ENCODE measurements at regions of chr4 and their contacts with region 1.

Region 1: GRCh38 chr4:2241410-2242353 is at the starts of genes HAUS3 and POLN:
- DNase-seq: peak; percentile 96
- ATAC-seq: peak; percentile 98
- H3K4me3 ChIP-seq: peak within 1 kb of the TSS; percentile 78
- H3K27ac ChIP-seq: peak within 1 kb of the TSS; percentile 48
- H3K4me1 ChIP-seq: peaks cover 6% of the 10 kb centered on the region
- H3K27me3 ChIP-seq: no peaks in the 10 kb centered on the region
- CTCF ChIP-seq: no peak
- POLR2A ChIP-seq: peak; percentile 26; the same call in 1 of the 2 replicates
- RAD21 ChIP-seq: no peak; the same call in 1 of the 2 replicates
- total RNA-seq, gene HAUS3: 4.3 and 6.9 TPM in 2 replicates
- total RNA-seq, gene POLN: 0.72 and 1.1 TPM in 2 replicates

Region 2: DNA sequence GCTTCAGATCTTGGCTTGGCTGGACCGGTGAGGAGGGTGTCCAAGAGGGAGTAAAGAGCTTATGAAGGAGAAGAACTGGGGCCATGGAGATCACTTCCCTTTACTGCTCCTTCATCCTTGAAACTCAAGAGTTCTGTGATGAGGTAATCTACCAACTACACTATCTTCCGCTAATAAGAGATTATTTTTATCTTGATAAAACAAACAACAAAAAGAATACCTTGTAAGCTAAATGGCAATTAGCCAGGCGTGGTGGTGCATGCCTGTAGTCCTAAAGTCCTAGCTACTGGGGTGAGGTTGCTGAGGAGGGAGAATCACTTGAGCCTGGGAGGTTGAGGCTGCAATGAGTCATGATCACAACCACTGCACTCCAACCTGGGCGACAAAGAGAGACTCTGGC is 47.2 kb before region 1 on chr4:
- CTCF ChIA-PET with region 1: no interaction called
- POLR2A ChIA-PET with region 1: no interaction called
- dilution Hi-C with region 1: no loop called
- in situ Hi-C with region 1: no loop called
- intact Hi-C with region 1: no loop called
- DNase-seq: peak; percentile 10
- ATAC-seq: no peak
- H3K4me3 ChIP-seq: no peak overlapping the region
- H3K27ac ChIP-seq: no peak overlapping the region
- H3K4me1 ChIP-seq: no peaks in the 10 kb centered on the region
- H3K27me3 ChIP-seq: no peaks in the 10 kb centered on the region
- CTCF ChIP-seq: no peak
- POLR2A ChIP-seq: no peak
- RAD21 ChIP-seq: no peak

Region 3: GRCh38 chr4:2212831-2213230 is 28.9 kb before region 1 on chr4:
- CTCF ChIA-PET with region 1: no interaction called
- POLR2A ChIA-PET with region 1: no interaction called
- dilution Hi-C with region 1: no loop called
- in situ Hi-C with region 1: no loop called
- intact Hi-C with region 1: no loop called
- DNase-seq: no peak
- ATAC-seq: no peak
- H3K4me3 ChIP-seq: no peak overlapping the region
- H3K27ac ChIP-seq: no peak overlapping the region
- H3K4me1 ChIP-seq: no peaks in the 10 kb centered on the region
- H3K27me3 ChIP-seq: peaks cover 2% of the 10 kb centered on the region
- CTCF ChIP-seq: no peak
- POLR2A ChIP-seq: no peak
- RAD21 ChIP-seq: no peak

Region 4: GRCh38 chr4:2462218-2462991 is 220.7 kb after region 1 on chr4:
- CTCF ChIA-PET with region 1: no interaction called
- POLR2A ChIA-PET with region 1: interaction called, 7 read pairs
- dilution Hi-C with region 1: no loop called
- in situ Hi-C with region 1: no loop called
- intact Hi-C with region 1: loop called (anchors 5 kb)
- DNase-seq: peak; percentile 76
- ATAC-seq: peak; percentile 97
- H3K4me3 ChIP-seq: peak overlapping the region; percentile 37
- H3K27ac ChIP-seq: peak overlapping the region; percentile 6; the same call in 1 of the 2 replicates
- H3K4me1 ChIP-seq: peaks cover 2% of the 10 kb centered on the region; the same call in 1 of the 2 replicates
- H3K27me3 ChIP-seq: peaks cover 8% of the 10 kb centered on the region
- CTCF ChIP-seq: peak; percentile 62
- POLR2A ChIP-seq: no peak
- RAD21 ChIP-seq: peak; percentile 62

Measured in IMR-90 (cell line).